ENCODE measurements at regions of chr2 and their contacts with region 1.

Region 1: DNA sequence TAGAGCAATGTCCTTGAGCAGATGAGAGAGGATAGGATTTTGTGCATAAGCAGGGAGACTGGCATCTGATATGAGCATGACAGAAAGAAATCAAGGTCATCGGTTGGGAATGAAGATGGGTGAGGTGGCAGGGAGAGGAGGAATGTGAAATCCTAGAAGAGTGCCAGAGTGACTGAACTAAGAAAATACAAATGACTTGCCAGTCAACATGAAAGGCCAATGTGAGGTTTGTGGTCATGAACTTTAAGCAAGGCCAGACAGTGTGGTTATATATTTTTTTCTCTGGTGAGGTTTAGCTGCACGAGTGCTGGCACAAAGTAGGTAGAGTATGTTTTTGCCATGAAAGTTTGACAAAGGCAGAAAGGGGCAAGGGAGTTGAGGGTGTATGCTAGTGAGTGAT is 21.2 kb downstream of the QPCT start:
- DNase-seq: peak; percentile 35
- ATAC-seq: peak; percentile 70
- H3K4me3 Mint-ChIP-seq: no peak overlapping the region
- H3K27ac Mint-ChIP-seq: no peak overlapping the region
- H3K4me1 Mint-ChIP-seq: no peaks in the 10 kb centered on the region
- H3K27me3 Mint-ChIP-seq: peaks cover 40% of the 10 kb centered on the region

Region 2: GRCh38 chr2:37250869-37251740 is 114.6 kb before region 1 on chr2:
- CTCF ChIA-PET with region 1: no interaction called
- POLR2A ChIA-PET with region 1: no interaction called
- DNase-seq: no peak
- ATAC-seq: no peak
- H3K4me3 Mint-ChIP-seq: no peak overlapping the region
- H3K27ac Mint-ChIP-seq: no peak overlapping the region
- H3K4me1 Mint-ChIP-seq: no peaks in the 10 kb centered on the region
- H3K27me3 Mint-ChIP-seq: no peaks in the 10 kb centered on the region

Region 3: GRCh38 chr2:37376421-37377186 is 10.9 kb after region 1 on chr2:
- CTCF ChIA-PET with region 1: interaction called, 11 read pairs
- POLR2A ChIA-PET with region 1: interaction called, 6 read pairs
- DNase-seq: peak; percentile 66
- ATAC-seq: peak; percentile 95
- H3K4me3 Mint-ChIP-seq: peak overlapping the region; percentile 50
- H3K27ac Mint-ChIP-seq: peak overlapping the region; percentile 5
- H3K4me1 Mint-ChIP-seq: peaks cover 31% of the 10 kb centered on the region
- H3K27me3 Mint-ChIP-seq: peaks cover 46% of the 10 kb centered on the region

Region 4: GRCh38 chr2:37387148-37387835 is 21.6 kb after region 1 on chr2:
- CTCF ChIA-PET with region 1: no interaction called
- POLR2A ChIA-PET with region 1: no interaction called
- DNase-seq: no peak
- ATAC-seq: no peak
- H3K4me3 Mint-ChIP-seq: no peak overlapping the region
- H3K27ac Mint-ChIP-seq: no peak overlapping the region
- H3K4me1 Mint-ChIP-seq: no peaks in the 10 kb centered on the region
- H3K27me3 Mint-ChIP-seq: no peaks in the 10 kb centered on the region